Activated CD4-positive, alpha-beta memory T cell treated with anti-CD3 and anti-CD28 coated beads, Interleukin-2, amount 10 ng/mL, durations not matched to agents 7 days and 5 days (primary cell): ENCODE measurements at regions of chr14 and their contacts with region 1.

Region 1: GRCh38 chr14:50311975-50312733 is at the starts of genes DMAC2L and L2HGDH:
- DNase-seq: peak; percentile 91
- H3K4me3 Mint-ChIP-seq: peak within 1 kb of the TSS; percentile 95
- H3K27ac Mint-ChIP-seq: peak within 1 kb of the TSS; percentile 84
- H3K4me1 Mint-ChIP-seq: peaks cover 35% of the 10 kb centered on the region
- H3K27me3 Mint-ChIP-seq: no peaks in the 10 kb centered on the region
- total RNA-seq, gene DMAC2L: 12.2 to 12.6 TPM
- total RNA-seq, gene L2HGDH: 9.7 to 10.0 TPM

Region 2: DNA sequence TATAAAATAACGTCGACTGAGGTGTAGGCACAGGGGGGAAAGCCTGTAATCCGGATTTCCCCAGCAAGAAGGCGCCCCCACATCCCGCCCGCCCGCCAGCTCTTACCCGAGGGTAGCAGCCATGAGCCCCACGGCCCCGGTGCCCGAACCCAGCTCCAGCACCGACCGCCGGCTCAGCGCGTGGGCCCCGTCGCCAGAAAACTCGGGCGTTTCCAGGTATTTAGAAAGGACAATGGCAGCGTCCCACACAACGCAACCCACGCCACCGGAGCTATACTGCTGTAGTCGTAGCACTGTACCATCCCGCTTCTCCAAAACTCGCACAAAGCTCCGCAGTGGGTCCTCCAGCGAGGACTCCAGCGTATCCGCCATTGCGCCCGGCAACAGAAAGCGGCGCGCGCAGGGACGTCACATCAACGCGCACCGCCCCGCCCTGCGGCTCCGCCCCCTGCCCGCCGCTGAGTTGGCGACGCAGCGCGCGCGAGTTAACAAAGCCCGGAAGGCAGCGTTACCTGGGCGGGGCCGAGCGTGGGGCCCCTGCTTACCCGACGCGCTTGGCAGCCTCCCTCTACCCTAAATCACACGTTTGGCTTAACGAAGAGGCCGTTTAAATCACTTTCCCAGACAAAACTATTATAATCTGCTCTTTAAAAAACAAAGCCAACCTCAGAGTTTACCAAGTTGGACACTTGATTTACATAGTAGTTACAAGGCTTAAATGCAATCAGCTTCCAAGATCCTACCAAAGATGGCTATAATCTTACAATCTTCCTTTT is 195.8 kb before region 1 on chr14 and contains the start of gene VCPKMT:
- CTCF ChIA-PET with region 1: no interaction called
- POLR2A ChIA-PET with region 1: interaction called, 11 read pairs
- DNase-seq: peak; percentile 97
- H3K4me3 Mint-ChIP-seq: peak within 1 kb of the TSS; percentile 99
- H3K27ac Mint-ChIP-seq: peak within 1 kb of the TSS; percentile 97
- H3K4me1 Mint-ChIP-seq: peaks cover 40% of the 10 kb centered on the region
- H3K27me3 Mint-ChIP-seq: no peaks in the 10 kb centered on the region
- total RNA-seq, gene VCPKMT: 7.5 to 9.5 TPM

Region 3: DNA sequence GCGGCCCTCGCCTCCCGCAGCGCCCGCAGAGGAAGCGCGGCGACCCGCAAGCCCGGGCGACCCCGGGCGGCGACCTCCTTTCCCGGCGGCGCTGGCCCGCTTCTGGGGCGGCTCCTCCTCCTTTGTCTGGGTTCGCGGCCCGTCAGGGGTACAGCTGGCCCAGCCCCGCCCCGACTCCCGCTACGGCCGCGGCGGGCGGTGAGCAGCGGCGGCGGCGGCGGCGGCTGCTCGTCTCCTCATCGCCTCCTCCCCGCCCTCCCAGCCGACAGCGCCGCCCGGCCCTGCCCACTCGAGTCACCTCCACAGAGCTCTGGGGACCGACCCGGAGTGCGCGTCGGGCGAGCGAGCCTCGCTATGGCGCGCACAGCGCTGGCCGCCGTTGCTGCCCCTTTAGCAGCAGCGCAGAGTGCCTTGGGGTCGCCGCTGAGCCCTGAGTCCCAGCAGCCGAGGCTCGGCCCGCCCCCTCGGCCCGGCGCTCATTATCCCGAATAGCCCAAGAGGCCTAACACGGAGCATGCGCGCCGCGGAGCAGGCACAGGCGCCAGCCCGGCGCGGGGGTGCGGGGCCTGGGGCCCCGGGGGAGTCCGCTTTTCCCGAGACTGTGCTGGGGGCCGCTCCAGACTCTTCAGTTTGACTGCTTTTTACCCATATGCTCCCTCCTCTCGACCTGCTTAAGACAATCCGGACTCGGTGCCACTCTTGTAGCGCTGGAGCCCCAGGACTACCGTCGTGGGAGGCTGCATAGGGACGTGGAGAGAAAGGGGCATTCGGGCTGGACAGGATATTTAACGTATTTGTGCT is 80.5 kb before region 1 on chr14 and contains the start of gene SOS2:
- CTCF ChIA-PET with region 1: interaction called, 4 read pairs
- POLR2A ChIA-PET with region 1: interaction called, 12 read pairs
- DNase-seq: peak; percentile 84
- H3K4me3 Mint-ChIP-seq: peak within 1 kb of the TSS; percentile 73
- H3K27ac Mint-ChIP-seq: peak within 1 kb of the TSS; percentile 73
- H3K4me1 Mint-ChIP-seq: peaks cover 51% of the 10 kb centered on the region
- H3K27me3 Mint-ChIP-seq: peaks cover 10% of the 10 kb centered on the region
- total RNA-seq, gene SOS2: 21.7 to 22.4 TPM

Region 4: DNA sequence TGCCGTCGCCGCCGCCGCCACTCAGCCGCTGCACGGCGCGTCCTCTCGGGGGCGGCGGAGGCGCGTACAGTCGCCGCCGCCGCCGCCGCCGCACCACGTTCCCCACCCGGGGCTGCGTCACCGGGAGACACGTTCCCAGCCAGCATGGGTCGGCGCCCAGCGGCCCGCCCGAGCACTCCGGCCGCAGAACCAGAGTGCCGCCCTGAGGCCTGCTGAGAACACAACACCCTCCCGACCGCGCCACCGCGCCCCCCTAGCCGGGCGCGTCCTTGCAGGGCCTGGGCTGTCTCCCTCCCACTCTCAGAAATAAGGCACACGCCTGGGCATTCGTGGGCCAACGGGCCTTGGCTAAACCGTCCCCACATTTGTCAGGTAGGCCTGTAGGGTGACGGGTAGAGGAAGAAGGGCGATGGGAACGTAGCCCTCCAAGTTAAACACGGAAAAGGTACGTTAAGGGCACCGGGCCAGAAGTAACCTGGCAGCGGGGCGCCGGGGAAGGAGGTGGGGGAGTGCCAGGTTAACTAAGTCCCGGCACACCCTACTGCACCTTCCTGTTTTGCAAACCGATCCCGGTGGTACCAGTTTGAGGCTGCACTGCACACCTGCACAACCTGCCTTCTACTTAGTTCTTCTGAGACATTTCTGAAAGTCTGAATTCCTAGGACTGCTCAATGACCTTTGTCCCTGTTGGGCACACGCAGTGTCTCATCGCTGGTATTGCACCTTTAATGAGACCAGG is 220.5 kb after region 1 on chr14 and contains the start of gene MAP4K5:
- CTCF ChIA-PET with region 1: interaction called, 4 read pairs
- POLR2A ChIA-PET with region 1: interaction called, 17 read pairs
- DNase-seq: peak; percentile 90
- H3K4me3 Mint-ChIP-seq: peak within 1 kb of the TSS; percentile 85
- H3K27ac Mint-ChIP-seq: peak within 1 kb of the TSS; percentile 55
- H3K4me1 Mint-ChIP-seq: peaks cover 37% of the 10 kb centered on the region
- H3K27me3 Mint-ChIP-seq: peaks cover 11% of the 10 kb centered on the region
- total RNA-seq, gene MAP4K5: 22.0 TPM